ENCODE measurements at regions of chr17 and their contacts with region 1.

Region 1: DNA sequence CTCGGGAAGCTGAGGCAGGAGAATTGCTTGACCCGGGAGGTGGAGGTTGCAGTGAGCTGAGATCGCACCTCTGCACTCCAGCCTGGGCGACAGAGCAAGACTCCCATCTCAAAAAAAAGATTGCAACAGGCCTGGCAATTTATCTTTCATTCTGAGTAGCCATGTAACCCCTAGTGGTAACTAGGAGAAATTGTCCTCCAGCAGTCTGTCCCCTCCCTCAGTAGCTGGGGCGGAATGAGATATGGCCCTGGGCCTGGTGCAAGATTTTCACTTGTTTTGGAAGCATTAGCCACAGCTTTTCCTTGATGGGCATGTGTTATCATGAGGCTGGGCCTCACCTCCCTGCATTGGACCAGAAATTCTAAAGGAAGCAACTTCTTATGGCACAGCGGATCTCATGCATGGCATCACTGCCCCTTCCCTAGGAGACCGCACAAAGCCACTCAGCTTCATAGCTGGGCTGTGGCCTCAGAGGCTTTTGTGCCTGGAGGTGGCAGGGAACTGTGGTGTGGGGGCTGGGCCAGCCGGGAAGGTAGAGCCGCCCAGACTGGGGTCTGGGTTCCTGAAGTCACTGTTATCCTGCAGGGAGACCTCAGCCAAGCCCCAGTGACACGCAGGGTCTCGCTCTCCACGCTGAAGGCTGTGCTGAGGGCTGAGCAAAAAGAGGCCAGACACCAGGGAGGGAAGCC is 13.4 kb downstream of the NATD1 start:
- DNase-seq: peak; percentile 73
- CTCF ChIP-seq: no peak

Region 2: GRCh38 chr17:21186399-21187187 is 53.2 kb before region 1 on chr17:
- in situ Hi-C with region 1: loop called (anchors 10 kb)
- DNase-seq: no peak
- CTCF ChIP-seq: no peak

Region 3: DNA sequence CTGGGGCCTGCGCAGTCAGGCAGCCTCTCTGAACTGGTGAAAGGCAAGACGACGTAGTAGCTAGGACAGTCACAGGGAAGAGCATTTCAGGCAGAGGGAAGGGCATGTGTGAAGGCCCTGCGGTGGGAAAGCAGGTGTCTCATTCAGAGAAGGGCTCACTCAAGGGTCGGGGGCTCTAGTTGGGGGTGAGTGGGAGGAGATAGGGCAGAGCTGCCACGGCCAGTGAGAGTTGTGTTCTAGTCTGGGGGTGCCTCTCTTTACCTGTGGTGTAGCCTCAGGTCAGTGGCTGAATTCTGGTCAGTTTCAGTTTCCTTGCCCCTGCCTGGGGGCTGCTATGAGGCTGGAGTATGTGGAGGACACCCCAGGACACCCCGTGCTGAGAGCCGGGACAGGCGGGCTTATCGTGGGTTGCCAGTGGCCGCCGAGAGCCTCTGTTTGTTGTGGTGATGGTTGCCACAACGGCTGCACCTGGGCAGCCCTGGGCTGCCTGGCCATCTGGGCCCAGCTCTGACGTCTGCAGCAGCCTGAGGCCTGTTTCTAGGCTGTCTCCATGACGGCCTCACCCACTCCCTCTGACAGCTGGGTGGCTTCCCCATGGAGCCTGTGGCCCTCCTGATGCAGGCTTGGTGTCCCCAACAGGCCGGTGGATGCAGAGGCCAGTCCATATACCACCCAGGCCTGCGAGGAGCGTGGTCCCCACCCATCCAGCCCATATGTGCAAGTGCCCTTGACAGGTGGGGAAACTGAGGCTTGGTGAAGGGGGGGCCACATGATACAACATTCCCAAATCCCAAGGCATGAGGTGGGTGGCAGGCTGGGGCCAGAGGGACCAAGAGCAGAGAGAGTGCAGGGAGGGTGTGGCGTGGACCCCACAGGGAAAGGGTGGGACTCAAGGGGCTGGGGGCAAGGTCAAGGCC is 55.5 kb after region 1 on chr17:
- in situ Hi-C with region 1: no loop called
- DNase-seq: peak; percentile 44
- CTCF ChIP-seq: no peak

Measured in GM13976 (cell line).